Heart left ventricle (tissue), 16 donors: ENCODE measurements at regions of chr1 and their contacts with region 1.

Region 1: DNA sequence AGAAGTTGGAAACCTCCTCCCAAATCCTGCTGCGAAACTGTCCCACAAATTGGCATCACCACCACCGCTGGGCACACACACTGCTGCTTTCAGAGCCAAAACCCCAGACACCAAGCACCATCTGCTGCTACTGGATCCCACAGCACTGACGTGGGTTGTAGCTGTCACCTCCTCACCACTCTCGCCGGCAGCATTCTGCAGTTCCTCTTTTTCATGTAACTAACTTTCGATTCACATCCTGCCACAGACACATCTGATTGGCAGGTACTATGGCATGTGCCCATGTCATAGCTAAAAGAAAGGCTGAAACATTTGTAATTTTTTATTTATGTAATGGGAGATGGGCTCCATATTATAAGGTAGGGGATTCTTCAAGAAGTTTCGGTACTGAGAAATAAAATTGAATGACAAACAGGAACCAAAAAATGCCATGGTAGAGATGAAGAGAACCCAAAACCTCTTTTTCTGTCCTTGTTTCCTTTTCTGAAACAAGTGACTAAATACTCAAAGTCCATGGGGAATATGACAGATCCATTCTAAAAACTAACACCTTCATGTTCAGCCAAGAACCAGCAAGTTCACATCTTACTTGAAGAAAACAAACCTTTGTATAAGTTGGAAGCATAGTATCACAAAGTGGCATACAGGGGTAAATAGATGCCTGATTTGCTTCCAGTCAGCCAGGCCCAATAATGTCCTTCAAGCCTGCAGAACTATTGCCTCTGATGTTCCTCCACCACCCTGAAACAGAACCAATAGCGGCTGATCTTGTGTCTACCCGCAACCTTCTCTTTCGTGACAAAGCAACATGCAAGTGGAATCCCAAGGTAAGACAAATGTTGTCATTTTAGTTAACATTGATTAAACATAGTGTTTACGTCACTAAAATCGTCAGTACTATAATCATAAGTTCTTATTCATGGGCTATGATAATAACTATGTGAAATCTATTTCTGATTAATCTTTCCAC is 26.6 kb upstream of the RGS13 start:
- DNase-seq: peak; percentile 26 to 60 (median 32)
- ATAC-seq: peak; percentile 39 to 79 (median 61)
- H3K4me3 ChIP-seq: no peak overlapping the region
- H3K27ac ChIP-seq: peak overlapping the region in 1 of 12 donors; percentile 41
- H3K4me1 ChIP-seq: peaks cover 0 to 16% (median 0%) of the 10 kb centered on the region in 12 donors
- H3K27me3 ChIP-seq: no peaks in the 10 kb centered on the region
- CTCF ChIP-seq: no peak
- POLR2A ChIP-seq: no peak

Region 2: DNA sequence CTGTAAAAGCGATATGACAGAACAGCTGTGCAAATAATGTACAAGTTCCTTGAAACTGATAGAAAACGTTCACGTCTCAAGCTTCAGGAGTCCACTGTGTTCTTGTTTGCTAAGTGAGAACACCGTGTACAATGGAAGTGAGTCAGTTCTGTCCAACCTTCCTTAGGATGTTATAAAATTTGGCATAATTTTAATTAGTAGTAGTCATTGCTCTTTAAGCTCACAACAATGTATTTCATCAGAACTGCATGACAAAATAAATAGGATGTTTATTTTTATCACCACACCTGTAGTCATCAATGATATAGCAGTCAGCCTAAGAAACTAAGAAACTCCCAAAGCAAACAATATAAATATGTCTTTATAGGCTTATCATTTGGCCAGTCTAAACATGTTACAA is 252.5 kb after region 1 on chr1:
- intact Hi-C with region 1: no loop called
- DNase-seq: no peak
- ATAC-seq: peak in 2 of 4 donors; percentile 36 to 37
- H3K4me3 ChIP-seq: no peak overlapping the region
- H3K27ac ChIP-seq: no peak overlapping the region
- H3K4me1 ChIP-seq: peaks cover 0 to 10% (median 0%) of the 10 kb centered on the region in 12 donors
- H3K27me3 ChIP-seq: no peaks in the 10 kb centered on the region
- CTCF ChIP-seq: no peak
- POLR2A ChIP-seq: no peak

Region 3: DNA sequence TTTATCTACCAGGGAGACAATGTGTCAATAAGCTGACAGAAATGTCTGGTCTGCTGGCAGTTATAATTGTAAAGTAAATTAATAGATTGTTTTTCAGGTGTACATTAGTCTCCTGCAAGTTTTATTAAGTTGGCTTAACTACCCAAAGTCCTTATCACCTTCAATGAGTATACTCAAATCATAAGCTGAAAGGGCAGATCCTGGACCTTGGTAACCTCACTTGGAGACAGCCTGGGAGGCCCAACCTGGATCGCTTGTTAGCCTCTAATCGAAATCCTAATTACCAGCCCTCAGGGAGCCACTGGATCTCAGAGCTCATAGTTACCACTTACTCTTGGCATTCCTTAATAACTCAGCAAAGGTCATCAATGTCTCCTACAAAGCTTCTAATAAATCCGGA is 400.1 kb after region 1 on chr1:
- intact Hi-C with region 1: loop called in 4 of 10 experiments (anchors 10 kb)
- DNase-seq: no peak
- ATAC-seq: no peak
- H3K4me3 ChIP-seq: no peak overlapping the region
- H3K27ac ChIP-seq: no peak overlapping the region
- H3K4me1 ChIP-seq: peaks cover 0 to 9% (median 0%) of the 10 kb centered on the region in 12 donors
- H3K27me3 ChIP-seq: no peaks in the 10 kb centered on the region
- CTCF ChIP-seq: no peak
- POLR2A ChIP-seq: no peak

Region 4: DNA sequence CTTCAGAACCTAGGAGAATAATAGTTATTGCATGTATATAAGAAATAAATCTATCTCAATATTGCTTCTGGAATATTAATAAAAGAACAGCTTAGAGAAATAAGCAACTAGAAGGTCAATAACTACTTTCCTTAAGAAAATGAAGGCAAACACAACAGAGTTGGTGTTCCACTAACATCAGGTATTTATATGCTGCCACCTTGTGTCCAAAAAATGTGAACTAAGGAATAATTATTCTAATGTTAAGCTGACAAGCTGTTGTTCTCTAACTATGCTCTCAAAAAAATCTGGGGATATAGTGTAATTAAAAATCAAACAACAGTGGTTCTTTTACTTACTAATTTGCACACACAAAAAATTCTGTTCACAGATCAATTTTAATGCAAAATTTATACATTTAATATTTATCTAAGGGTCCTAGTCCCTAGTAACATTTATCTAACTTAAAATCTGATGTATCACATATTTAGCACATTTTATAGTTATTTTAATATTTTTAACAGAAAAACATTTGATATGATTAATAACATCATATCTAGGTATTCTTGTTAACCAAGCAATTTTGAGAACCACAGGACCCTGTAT is 410.1 kb after region 1 on chr1:
- intact Hi-C with region 1: loop called in 5 of 10 experiments (anchors 5 to 10 kb)
- DNase-seq: no peak
- ATAC-seq: peak in 2 of 4 donors; percentile 37 to 71
- H3K4me3 ChIP-seq: no peak overlapping the region
- H3K27ac ChIP-seq: peak overlapping the region in 1 of 12 donors; percentile 19
- H3K4me1 ChIP-seq: peaks cover 0 to 2% (median 0%) of the 10 kb centered on the region in 12 donors
- H3K27me3 ChIP-seq: no peaks in the 10 kb centered on the region
- CTCF ChIP-seq: peak; percentile 43 to 72 (median 56)
- POLR2A ChIP-seq: no peak